ENCODE measurements at regions of chr14 and their contacts with region 1.

Region 1: DNA sequence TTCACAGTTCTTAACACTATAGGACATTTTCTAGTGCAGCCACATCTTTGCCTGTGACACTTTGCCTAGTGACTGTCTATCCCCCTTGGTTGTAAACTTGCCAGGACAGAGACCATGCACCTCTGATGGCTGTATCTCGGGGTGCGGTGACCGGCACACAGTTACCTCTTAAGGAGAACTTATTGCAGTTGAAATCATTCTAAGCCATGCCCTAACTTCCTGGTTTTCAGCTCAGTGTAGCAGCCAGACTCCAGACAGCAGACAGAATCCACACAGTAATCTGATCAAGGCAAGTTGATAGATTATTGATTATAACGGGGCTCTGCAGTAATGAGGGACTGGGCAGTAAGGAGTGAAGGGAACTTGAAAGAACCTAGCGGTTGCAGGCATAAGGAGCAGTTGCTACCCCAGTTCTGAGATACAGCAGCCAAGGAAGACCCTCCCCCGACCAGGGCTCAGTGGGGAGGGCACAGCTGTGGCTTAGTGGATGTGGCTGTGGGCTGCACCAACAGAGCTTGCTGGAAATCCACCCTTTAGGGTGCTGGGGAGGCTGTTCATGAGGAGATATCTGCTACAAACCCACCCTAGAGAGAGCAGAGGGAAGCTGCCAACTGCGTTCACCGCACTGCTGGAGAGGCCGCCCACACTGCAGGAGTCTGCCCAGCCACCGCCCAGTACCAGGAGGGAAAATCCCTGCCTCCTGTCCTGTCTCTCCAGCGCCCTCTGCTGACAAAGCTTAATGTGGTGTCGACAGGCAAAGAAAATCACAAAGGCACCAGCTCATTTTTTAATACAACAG is 58.2 kb upstream of the BEGAIN start:
- DNase-seq: no peak
- H3K4me3 ChIP-seq: no peak overlapping the region
- H3K27me3 ChIP-seq: peaks cover 6% of the 10 kb centered on the region; the same call in 1 of the 2 replicates
- CTCF ChIP-seq: peak; percentile 81

Region 2: GRCh38 chr14:100108042-100108825 is 537.2 kb before region 1 on chr14:
- CTCF ChIA-PET with region 1: no interaction called
- POLR2A ChIA-PET with region 1: no interaction called
- DNase-seq: no peak
- H3K4me3 ChIP-seq: no peak overlapping the region
- H3K27me3 ChIP-seq: no peaks in the 10 kb centered on the region
- CTCF ChIP-seq: peak; percentile 96

Region 3: DNA sequence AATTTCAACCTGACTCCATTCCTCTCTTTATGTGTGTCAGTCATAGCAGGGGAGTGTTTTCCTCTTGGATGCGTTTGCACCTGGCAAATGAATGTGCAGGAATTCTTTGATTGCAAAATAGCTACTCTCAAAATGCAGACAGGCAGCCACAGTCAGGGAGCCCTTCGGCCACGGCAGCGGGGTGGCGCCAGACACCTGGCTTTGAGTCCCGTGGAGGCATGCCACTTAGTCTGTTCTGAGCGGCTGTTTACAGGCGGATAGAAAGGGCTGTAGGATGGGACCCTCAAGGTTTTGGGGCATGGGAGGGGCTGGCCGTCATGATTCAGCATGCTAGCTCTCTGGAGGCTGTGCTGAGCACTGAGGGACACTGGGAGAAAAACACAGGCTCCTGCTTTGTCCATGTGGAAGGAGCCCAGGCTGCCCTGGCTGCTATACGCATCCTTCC is 205.2 kb before region 1 on chr14:
- CTCF ChIA-PET with region 1: interaction called, 25 read pairs
- POLR2A ChIA-PET with region 1: no interaction called
- DNase-seq: no peak
- H3K4me3 ChIP-seq: no peak overlapping the region
- H3K27me3 ChIP-seq: no peaks in the 10 kb centered on the region
- CTCF ChIP-seq: peak; percentile 67

Region 4: GRCh38 chr14:100634026-100634425 is 11.4 kb before region 1 on chr14:
- CTCF ChIA-PET with region 1: interaction called, 30 read pairs
- POLR2A ChIA-PET with region 1: no interaction called
- DNase-seq: no peak
- H3K4me3 ChIP-seq: no peak overlapping the region
- H3K27me3 ChIP-seq: peaks cover 19% of the 10 kb centered on the region
- CTCF ChIP-seq: no peak

Measured in BJ (cell line).